ENCODE measurements at regions of chr11 and their contacts with region 1.

Region 1: DNA sequence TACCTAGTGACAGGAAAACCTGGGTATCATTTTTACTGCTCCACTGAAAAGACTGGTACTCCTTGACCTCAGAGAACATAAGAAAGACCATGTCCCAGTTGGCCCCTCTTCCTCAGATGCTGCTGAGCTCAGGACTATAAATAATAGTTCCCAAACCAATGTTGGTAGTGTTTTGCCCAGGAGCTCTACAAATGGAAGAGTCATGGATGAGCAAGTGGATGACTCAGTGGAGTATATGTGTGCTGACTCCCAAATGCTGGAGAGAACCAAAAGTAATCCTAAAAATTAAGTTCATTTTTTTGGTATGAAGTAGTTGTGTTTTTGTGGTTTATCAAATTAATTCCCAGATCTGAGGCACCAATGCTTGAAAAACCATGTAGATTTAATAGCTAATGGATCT is 482.0 kb downstream of the KCNA4 start:
- DNase-seq: no peak
- H3K4me3 ChIP-seq: no peak overlapping the region
- H3K27ac ChIP-seq: no peak overlapping the region
- H3K4me1 ChIP-seq: no peaks in the 10 kb centered on the region
- H3K27me3 ChIP-seq: no peaks in the 10 kb centered on the region
- CTCF ChIP-seq: no peak
- POLR2A ChIP-seq: no peak

Region 2: GRCh38 chr11:29879560-29879959 is 344.7 kb after region 1 on chr11:
- intact Hi-C with region 1: loop called (anchors 5 kb)
- DNase-seq: no peak
- H3K4me3 ChIP-seq: no peak overlapping the region
- H3K27ac ChIP-seq: no peak overlapping the region
- H3K4me1 ChIP-seq: no peaks in the 10 kb centered on the region
- H3K27me3 ChIP-seq: no peaks in the 10 kb centered on the region
- CTCF ChIP-seq: no peak
- POLR2A ChIP-seq: no peak